HAP-1 (cell line): ENCODE measurements at regions of chrX and their contacts with region 1.

Region 1: DNA sequence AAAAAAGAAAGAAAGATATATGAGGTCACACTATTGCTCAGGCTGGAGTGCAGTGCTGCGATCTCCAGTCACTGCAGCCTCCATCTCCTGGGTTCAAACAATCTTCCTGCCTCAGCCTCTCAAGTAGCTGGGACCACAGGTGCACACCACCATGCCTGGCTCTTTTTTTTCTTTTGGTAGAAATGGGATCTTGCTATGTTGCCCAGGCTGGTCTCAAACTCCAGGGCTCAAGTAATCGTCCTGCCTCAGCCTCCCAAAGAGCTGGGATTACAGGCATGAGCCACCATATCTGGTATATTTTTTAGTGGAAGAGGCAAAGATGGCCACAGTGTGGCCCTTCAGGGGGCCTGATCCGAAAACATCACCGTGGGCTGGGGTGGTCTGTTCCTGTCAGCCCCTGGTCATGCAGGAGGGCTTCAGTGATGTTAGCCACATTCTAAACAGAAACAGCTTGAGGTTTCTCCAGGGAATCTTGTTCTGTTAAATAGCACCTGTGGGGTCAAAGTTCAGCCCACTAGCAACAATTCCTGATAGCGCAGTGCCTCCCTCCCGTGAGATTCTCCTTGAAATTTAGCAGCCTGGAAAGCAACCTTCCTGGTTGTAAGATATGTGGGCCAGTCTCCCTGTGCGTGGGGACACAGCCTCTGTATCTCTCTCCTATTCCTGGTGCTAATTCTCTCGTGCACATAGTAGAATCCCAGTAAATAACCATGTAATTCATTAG is 7.3 kb upstream of the DHRSX start:
- DNase-seq: no peak
- H3K4me3 ChIP-seq: no peak overlapping the region
- H3K4me1 ChIP-seq: peaks cover 3% of the 10 kb centered on the region; the same call in 1 of the 2 replicates
- H3K27me3 ChIP-seq: no peaks in the 10 kb centered on the region

Region 2: GRCh38 chrX:2548711-2549423 is 40.8 kb after region 1 on chrX:
- in situ Hi-C with region 1: loop called (anchors 5 kb)
- DNase-seq: peak; percentile 82 to 97
- H3K4me3 ChIP-seq: peak overlapping the region; percentile 6; the same call in 1 of the 2 replicates
- H3K4me1 ChIP-seq: peaks cover 48% of the 10 kb centered on the region
- H3K27me3 ChIP-seq: no peaks in the 10 kb centered on the region